ENCODE measurements at regions of chr21 and their contacts with region 1.

Region 1: GRCh38 chr21:44892536-44893277 is 19.2 kb upstream of the PTTG1IP start:
- DNase-seq: peak; percentile 78 to 80
- H3K4me3 ChIP-seq: no peak overlapping the region
- H3K27ac ChIP-seq: no peak overlapping the region
- H3K4me1 ChIP-seq: peaks cover 0 to 7% (median 0%) of the 10 kb centered on the region in 4 donors
- H3K27me3 ChIP-seq: peaks cover 0 to 60% (median 0%) of the 10 kb centered on the region in 3 donors
- CTCF ChIP-seq: peak in 5 of 7 experiments; percentile 75 to 87 (median 79)
- EP300 ChIP-seq: no peak
- POLR2A ChIP-seq: no peak

Region 2: DNA sequence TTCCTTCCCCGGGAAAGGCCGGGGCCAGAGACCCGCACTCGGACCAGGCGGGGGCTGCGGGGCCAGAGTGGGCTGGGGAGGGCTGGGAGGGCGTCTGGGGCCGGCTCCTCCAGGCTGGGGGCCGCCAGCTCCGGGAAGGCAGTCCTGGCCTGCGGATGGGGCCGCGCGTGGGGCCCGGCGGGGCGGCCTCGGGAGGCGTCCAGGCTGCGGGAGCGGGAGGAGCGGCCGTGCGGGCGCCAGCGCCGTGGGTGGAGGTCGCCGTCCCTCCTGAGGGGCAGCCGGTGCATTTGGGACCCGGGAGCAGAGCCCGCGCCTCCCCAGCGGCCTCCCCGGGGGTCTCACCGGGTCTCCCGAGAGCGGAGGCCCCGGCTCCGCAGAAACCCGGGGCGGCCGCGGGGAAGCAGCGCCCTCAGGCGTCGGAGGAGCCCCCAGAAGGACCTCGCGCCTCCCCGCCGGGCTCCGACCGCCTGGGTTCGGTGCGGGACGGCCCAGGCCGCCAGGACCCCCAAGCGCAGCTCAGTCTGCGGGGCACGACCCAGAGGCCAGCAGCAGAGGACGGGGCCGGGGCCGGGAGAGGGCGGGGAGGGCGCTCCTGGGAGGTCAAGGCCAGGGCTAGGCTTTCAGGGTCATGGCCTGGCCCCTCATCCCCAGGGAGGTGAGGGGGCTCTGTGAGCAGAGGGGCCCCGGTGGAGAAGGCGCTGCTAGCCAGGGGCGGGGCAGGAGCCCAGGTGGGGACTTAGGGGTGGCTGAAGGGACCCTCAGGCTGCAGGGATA is 39.9 kb after region 1 on chr21:
- intact Hi-C with region 1: loop called (anchors 5 kb)
- DNase-seq: peak in 1 of 2 donors; percentile 72
- H3K4me3 ChIP-seq: peak overlapping the region; percentile 48 to 63 (median 51)
- H3K27ac ChIP-seq: peak overlapping the region in 3 of 5 donors; percentile 42 to 70 (median 57)
- H3K4me1 ChIP-seq: peaks cover 21 to 53% (median 35%) of the 10 kb centered on the region in 4 donors
- H3K27me3 ChIP-seq: peaks cover 6 to 81% (median 53%) of the 10 kb centered on the region in 3 donors
- CTCF ChIP-seq: peak in 3 of 7 experiments; percentile 38 to 67 (median 45)
- EP300 ChIP-seq: no peak
- POLR2A ChIP-seq: no peak

Region 3: DNA sequence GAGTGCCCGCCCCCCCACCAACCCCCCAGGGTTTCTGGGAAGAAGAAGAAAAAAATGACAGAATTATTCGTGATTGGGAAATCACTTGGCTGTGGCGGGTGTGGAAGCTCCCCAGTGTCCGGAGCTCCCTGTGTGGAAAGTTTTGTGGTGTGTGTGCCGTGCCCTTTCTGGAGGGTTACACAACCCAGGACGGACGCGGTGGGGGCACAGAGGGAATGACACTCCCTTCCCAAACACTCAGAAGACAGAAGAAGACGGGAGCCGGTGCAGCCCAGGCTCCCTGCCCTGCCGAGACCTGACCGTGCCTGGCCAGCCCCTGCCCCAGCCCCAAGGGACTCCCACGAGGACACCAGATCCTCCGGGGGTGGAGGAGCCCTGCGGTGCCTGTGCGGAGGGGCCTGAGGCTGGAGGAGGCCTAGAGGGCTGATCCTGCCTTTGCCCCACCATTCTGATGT is 148.7 kb after region 1 on chr21:
- intact Hi-C with region 1: no loop called
- DNase-seq: peak in 1 of 2 donors; percentile 50
- H3K4me3 ChIP-seq: no peak overlapping the region
- H3K27ac ChIP-seq: peak overlapping the region in 4 of 5 donors; percentile 43 to 78 (median 68)
- H3K4me1 ChIP-seq: peaks cover 6 to 22% (median 15%) of the 10 kb centered on the region in 4 donors
- H3K27me3 ChIP-seq: peaks cover 0 to 4% (median 0%) of the 10 kb centered on the region in 3 donors
- CTCF ChIP-seq: no peak
- EP300 ChIP-seq: peak; percentile 36
- POLR2A ChIP-seq: no peak